ENCODE measurements at regions of chr5 and their contacts with region 1.

Region 1: DNA sequence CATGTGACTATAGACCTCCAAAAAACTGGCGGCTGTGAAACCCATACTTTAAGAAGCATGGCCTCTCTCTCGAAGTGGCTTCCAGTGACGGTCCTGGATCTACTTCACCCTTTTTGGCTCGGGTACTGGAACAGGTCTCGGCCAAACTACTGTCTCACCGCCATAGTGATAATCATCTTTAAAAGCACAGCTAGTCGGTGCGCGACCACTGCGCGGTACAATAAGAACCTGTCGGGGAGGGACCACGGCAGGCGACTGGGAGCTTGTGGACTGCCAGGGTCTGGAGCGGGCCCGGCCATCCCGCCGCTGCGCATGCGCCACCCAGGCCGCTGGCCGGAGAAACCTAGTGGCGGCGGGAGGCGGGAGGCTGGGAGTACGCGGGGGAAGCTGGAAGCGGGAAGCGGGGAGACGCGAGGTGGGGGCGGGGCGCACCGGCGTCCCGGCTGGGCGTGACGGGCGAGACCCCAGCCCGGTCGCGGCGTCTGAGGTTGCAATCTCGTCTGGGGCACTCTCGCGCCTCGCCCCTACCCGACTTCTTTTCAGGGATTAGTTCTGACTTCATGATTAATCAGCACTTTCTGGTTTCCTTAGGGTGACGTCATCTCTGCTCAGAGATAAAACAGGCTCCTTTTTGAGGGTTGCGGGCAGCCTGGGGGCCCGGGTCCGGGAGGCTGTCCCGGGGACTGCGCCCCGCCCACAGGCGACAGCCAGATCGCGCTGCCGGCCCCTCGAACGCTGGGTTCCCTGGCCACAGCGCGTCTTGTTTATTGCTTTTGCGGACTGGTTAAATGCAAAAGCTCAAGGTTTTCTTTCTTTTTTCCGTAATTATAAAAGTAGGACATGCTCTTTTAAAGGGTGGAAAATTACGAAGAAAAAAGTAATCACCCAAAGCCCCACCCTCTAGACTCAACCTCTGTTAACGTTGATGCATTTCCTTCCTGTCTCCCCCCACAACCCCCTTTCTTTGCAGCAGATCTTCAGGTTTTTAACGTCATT is 266.8 kb downstream of the CWC27 start:
- DNase-seq: peak; percentile 86
- CTCF ChIP-seq: no peak

Region 2: GRCh38 chr5:65047948-65048690 is 12.6 kb after region 1 on chr5:
- CTCF ChIA-PET with region 1: interaction called, 51 read pairs
- POLR2A ChIA-PET with region 1: no interaction called
- DNase-seq: no peak
- CTCF ChIP-seq: no peak

Region 3: DNA sequence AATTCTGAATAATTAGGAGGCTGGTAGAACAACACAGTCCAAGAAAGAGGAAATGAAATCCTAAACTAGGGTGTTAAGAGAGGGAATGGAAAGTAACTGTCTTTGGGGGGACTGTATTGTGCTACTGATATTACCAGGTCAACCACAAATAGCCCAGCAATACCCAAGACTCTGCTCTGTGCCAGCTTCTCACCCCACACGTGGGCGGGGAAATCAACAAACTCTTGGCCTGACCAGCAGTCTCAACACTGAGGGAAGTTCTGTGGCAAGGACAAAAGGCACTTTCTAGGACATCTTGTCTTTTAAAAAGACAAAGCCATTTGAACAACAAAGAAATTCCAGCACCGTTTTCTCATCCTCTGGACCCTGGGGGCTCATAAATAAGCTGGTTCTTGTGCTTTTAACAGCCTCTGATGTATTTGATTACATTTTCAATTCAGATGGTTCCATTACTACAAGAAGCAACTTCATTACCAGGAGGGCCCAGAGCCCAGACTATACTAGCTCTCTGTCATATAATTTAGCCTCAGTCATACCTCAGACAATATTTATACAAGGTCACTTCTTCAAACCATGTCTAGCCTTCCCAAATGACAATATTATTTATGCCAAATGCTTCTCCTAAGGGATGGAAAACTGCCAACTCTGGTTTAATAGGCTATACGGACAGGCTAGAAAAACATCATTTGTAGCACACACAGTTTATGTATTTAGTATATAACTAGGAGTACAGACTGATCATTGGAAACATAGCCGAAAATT is 31.1 kb after region 1 on chr5:
- CTCF ChIA-PET with region 1: interaction called, 21 read pairs
- POLR2A ChIA-PET with region 1: no interaction called
- DNase-seq: no peak
- CTCF ChIP-seq: no peak

Measured in GM10248 (cell line).